Motor neuron (in vitro differentiated cells): ENCODE measurements at regions of chr6 and their contacts with region 1.

Region 1: DNA sequence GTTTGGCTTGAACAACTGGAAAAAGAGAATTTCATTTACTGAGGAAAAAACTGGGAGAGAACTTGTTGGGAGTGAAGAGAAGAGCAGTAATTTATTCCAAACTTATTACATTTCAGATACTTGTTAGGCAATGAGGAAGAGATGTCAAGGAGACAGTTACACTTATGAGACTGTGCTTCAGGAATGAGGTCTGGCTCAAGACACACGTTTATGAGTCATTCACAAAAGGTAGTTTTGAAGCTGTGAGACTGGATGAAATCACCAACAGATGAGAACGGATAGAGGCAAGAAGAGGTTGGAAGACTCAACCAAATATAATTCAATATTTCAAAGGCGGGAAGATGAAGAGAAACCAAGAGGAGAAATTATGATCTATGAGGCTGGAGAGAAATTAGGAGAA is 70.6 kb upstream of the DEFB112 start:
- ATAC-seq: no peak
- H3K4me3 ChIP-seq: no peak overlapping the region
- H3K27ac ChIP-seq: no peak overlapping the region
- H3K4me1 ChIP-seq: no peaks in the 10 kb centered on the region

Region 2: DNA sequence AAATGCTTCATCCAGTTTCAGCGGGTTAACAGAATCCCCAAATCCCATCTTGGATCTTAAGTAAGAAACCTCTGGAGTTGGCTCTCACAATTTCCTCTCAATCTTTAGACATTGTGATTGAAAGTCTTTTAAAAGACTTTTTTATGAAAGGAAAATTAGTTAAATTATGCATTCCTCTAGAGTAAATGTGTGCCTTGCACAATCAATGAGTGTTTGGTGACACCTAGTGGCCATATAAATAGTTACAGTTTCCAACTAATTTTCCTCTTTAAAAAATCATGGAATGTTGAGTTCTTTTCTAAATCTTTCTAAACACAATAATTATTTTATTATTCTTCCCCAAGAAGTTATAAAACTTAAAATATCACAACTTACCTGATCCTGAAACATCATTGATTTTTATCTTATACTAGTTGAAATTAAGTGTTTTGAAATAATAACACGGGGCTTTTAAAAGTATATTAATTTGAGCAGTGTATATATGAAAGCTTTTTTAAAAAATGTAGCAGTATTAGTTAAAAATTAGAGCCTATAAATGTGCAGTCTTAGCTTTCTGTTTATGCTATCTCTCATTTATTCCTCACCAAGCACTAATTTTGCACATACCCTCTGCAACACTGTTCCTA is 1900.8 kb after region 1 on chr6:
- in situ Hi-C with region 1: loop called in 1 of 9 experiments (anchors 25 kb)
- ATAC-seq: peak in 2 of 8 experiments; percentile 28 to 33
- H3K4me3 ChIP-seq: no peak overlapping the region
- H3K27ac ChIP-seq: no peak overlapping the region
- H3K4me1 ChIP-seq: no peaks in the 10 kb centered on the region